OCI-LY7 (cell line): ENCODE measurements at regions of chr5 and their contacts with region 1.

Region 1: DNA sequence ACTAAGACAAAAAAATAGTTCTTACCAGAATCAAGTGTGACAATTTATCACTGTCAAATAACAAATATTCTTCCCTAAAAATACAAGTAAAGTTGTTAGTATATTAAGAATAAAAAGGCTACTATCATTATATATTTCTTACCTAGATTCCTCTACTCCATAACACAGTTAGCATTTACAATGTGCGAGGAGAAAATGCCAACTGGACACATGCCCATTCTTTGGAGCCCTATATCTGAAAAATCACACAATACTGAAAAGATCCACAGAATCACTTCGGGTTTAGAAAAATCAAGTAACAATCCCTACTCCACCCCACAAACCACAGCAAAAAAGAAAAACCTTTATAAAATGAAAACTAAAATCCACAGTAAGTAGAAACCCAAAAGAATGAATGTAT is 70.9 kb downstream of the PKD2L2 start:
- DNase-seq: no peak
- H3K4me3 ChIP-seq: no peak overlapping the region
- H3K27ac ChIP-seq: no peak overlapping the region
- H3K4me1 ChIP-seq: no peaks in the 10 kb centered on the region
- CTCF ChIP-seq: no peak

Region 2: GRCh38 chr5:137997726-137998213 is 37.6 kb after region 1 on chr5:
- CTCF ChIA-PET with region 1: no interaction called
- POLR2A ChIA-PET with region 1: interaction called, 11 read pairs
- intact Hi-C with region 1: no loop called
- DNase-seq: peak; percentile 8
- H3K4me3 ChIP-seq: no peak overlapping the region
- H3K27ac ChIP-seq: no peak overlapping the region
- H3K4me1 ChIP-seq: no peaks in the 10 kb centered on the region
- CTCF ChIP-seq: no peak